Endothelial cell of umbilical vein (primary cell): ENCODE measurements at regions of chr2 and their contacts with region 1.

Region 1: DNA sequence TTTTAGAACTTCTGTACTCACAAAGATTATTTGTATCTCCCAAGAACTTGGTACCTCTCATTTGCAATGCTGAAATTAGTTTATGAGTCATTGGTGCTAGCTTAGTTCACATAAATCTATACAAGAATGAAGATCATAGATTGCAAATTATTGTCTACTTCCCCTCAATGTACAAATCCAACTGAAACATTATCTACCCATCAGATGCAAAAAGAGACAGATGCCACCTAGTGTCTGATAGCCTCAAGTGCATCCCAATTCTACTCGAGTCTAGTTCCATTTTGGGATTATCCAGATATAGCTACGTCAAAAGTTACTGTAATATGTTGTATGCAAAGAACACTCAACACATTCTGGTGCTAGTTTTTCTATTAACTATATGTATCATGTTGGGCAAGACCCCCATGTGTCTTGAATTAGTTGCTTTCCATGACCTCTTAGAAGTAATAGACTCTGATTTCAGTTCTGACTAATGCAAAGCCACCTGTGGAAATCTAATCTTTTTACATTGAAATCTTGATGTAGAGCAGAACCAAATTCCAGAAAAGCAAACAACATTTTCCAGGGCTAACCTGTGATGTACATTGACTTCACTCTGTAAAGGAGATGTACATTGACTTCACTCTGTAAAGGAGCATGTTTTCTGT is 210.0 kb downstream of the RBM43 start:
- DNase-seq: peak; percentile 69
- H3K4me3 ChIP-seq: no peak overlapping the region
- H3K27ac ChIP-seq: no peak overlapping the region
- H3K4me1 ChIP-seq: no peaks in the 10 kb centered on the region
- H3K27me3 ChIP-seq: no peaks in the 10 kb centered on the region
- CTCF ChIP-seq: peak; percentile 62 to 73
- POLR2A ChIP-seq: no peak

Region 2: DNA sequence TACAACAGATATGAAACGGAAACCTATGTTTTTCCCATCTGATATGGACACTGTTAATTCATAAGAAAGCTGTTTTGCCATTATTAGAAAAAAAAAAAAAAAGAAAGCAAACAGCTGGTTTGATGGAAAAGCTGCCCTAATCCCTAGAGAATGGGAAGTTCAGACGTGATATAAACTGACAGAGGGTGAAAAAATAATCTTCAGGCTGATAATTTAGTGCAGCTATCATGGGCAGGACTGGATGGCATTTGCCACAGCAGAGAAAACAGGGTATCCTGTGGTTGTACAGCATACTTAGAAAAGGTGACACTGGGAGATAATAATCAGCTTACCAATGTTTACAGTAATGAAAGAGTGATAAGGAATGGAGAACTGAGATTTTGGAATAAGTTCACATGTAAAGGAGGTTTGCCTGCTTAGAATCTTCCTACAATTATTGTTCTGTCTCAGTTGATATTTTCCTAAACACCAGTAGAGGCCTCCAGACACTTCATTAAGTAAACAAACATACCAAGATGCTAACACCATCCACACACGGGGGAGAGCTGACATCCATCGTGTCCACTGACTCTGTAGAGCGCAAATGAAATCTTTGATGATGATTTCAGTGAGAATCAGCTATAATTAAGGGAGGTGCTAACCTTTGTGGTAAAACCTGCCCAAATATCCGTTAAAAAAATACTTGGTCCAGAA is 1252.5 kb before region 1 on chr2:
- CTCF ChIA-PET with region 1: interaction called, 6 read pairs
- POLR2A ChIA-PET with region 1: no interaction called
- dilution Hi-C with region 1: no loop called
- intact Hi-C with region 1: loop called (anchors 1 kb)
- DNase-seq: peak; percentile 52
- H3K4me3 ChIP-seq: no peak overlapping the region
- H3K27ac ChIP-seq: no peak overlapping the region
- H3K4me1 ChIP-seq: peaks cover 6% of the 10 kb centered on the region
- H3K27me3 ChIP-seq: no peaks in the 10 kb centered on the region
- CTCF ChIP-seq: peak; percentile 15 to 34
- POLR2A ChIP-seq: no peak

Region 3: DNA sequence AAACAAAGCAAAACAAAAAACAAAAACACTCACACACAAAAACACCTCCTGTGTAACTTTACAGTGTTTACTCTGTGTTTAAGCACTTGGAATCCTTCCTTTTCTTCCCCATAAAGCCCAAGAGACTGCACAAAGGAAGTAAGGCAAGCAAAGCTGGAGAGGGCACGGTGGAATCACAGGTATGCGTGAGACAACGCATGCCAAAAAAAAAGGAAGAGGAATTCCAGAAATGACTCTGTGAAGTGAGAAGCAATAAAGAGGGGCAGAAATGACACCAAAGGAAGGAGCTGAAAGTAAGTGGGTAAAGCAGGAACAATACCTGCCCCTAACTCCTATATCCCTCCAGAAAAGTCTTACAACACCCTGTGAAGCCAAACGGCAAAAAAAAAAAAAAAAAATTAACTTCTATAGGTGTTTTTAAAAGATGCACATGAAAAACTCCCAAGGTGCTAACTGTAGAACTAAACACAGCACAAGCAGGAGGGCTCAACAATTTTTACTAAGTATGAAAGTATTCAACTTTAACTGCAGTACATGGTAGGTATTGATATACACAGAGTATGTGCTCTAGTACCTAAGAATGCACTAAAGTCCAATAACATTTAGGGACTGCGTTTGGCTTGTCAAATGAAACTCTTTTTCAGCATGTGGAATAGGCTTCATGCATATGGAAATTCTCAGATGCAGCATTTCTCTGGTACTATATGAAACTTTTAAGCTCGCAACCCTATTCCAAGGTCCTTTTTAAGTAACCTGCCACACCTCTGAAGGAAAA is 573.3 kb before region 1 on chr2:
- CTCF ChIA-PET with region 1: interaction called, 10 read pairs
- POLR2A ChIA-PET with region 1: no interaction called
- dilution Hi-C with region 1: no loop called
- intact Hi-C with region 1: no loop called
- DNase-seq: peak; percentile 37
- H3K4me3 ChIP-seq: peak overlapping the region in 2 of 3 experiments; percentile 6 to 46
- H3K27ac ChIP-seq: peak overlapping the region; percentile 83
- H3K4me1 ChIP-seq: peaks cover 97% of the 10 kb centered on the region
- H3K27me3 ChIP-seq: no peaks in the 10 kb centered on the region
- CTCF ChIP-seq: no peak
- POLR2A ChIP-seq: peak; percentile 68

Region 4: GRCh38 chr2:150601280-150602038 is 450.2 kb before region 1 on chr2:
- CTCF ChIA-PET with region 1: interaction called, 20 read pairs
- POLR2A ChIA-PET with region 1: no interaction called
- dilution Hi-C with region 1: no loop called
- intact Hi-C with region 1: no loop called
- DNase-seq: peak; percentile 61
- H3K4me3 ChIP-seq: no peak overlapping the region
- H3K27ac ChIP-seq: no peak overlapping the region
- H3K4me1 ChIP-seq: no peaks in the 10 kb centered on the region
- H3K27me3 ChIP-seq: no peaks in the 10 kb centered on the region
- CTCF ChIP-seq: no peak
- POLR2A ChIP-seq: no peak

Region 5: GRCh38 chr2:150610671-150611279 is 440.9 kb before region 1 on chr2:
- CTCF ChIA-PET with region 1: interaction called, 5 read pairs
- POLR2A ChIA-PET with region 1: no interaction called
- dilution Hi-C with region 1: no loop called
- intact Hi-C with region 1: loop called (anchors 1 kb)
- DNase-seq: peak; percentile 45
- H3K4me3 ChIP-seq: no peak overlapping the region
- H3K27ac ChIP-seq: no peak overlapping the region
- H3K4me1 ChIP-seq: peaks cover 8% of the 10 kb centered on the region
- H3K27me3 ChIP-seq: no peaks in the 10 kb centered on the region
- CTCF ChIP-seq: peak; percentile 31 to 34
- POLR2A ChIP-seq: no peak

Region 6: GRCh38 chr2:151032741-151033191 is 18.9 kb before region 1 on chr2:
- CTCF ChIA-PET with region 1: interaction called, 10 read pairs
- POLR2A ChIA-PET with region 1: no interaction called
- dilution Hi-C with region 1: no loop called
- intact Hi-C with region 1: no loop called
- DNase-seq: no peak
- H3K4me3 ChIP-seq: no peak overlapping the region
- H3K27ac ChIP-seq: no peak overlapping the region
- H3K4me1 ChIP-seq: no peaks in the 10 kb centered on the region
- H3K27me3 ChIP-seq: no peaks in the 10 kb centered on the region
- CTCF ChIP-seq: no peak
- POLR2A ChIP-seq: no peak

Region 7: GRCh38 chr2:151040039-151040438 is 11.7 kb before region 1 on chr2:
- CTCF ChIA-PET with region 1: interaction called, 11 read pairs
- POLR2A ChIA-PET with region 1: no interaction called
- dilution Hi-C with region 1: no loop called
- intact Hi-C with region 1: no loop called
- DNase-seq: no peak
- H3K4me3 ChIP-seq: no peak overlapping the region
- H3K27ac ChIP-seq: no peak overlapping the region
- H3K4me1 ChIP-seq: no peaks in the 10 kb centered on the region
- H3K27me3 ChIP-seq: no peaks in the 10 kb centered on the region
- CTCF ChIP-seq: no peak
- POLR2A ChIP-seq: no peak

Region 8: DNA sequence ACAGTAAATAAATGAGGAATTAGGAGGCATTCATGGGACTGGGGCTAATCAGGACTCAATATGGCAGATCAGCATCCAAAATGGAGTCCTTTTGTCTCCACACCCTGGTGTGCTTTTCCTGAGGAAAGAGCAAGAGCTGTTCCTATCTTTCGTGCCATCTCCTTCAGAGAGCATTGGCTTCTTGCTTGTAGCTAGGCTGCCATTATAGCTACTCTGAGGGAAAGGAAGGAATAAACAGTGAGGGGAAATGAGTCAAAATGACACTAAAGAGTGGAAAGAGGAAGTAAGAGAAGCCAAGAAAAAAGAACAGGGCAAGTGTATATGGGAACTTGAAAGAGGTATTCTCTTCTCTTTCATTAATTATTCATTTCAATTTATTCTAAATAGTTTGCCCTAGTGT is 246.2 kb after region 1 on chr2:
- CTCF ChIA-PET with region 1: no interaction called
- POLR2A ChIA-PET with region 1: no interaction called
- dilution Hi-C with region 1: no loop called
- intact Hi-C with region 1: no loop called
- DNase-seq: peak; percentile 92
- H3K4me3 ChIP-seq: no peak overlapping the region
- H3K27ac ChIP-seq: peak overlapping the region; percentile 71
- H3K4me1 ChIP-seq: peaks cover 16% of the 10 kb centered on the region
- H3K27me3 ChIP-seq: no peaks in the 10 kb centered on the region
- CTCF ChIP-seq: no peak
- POLR2A ChIP-seq: peak; percentile 52